ENCODE measurements at regions of chr5 and their contacts with region 1.

Region 1: GRCh38 chr5:72244862-72245371 is 75.1 kb downstream of the MRPS27 start:
- DNase-seq: peak in 33 of 42 donors; percentile 18 to 79 (median 56)

Region 2: GRCh38 chr5:72138943-72139521 is 105.9 kb before region 1 on chr5:
- intact Hi-C with region 1: loop called (anchors 5 kb)
- DNase-seq: peak in 1 of 42 donors; percentile 22

Region 3: GRCh38 chr5:72179816-72180440 is 65.0 kb before region 1 on chr5:
- intact Hi-C with region 1: loop called (anchors 2 kb)
- DNase-seq: peak in 23 of 42 donors; percentile 17 to 67 (median 41)